H1 (cell line): ENCODE measurements at regions of chr15 and their contacts with region 1.

Region 1: GRCh38 chr15:45457641-45458433 is 64.7 kb downstream of the SLC30A4 start:
- DNase-seq: peak in 1 of 2 experiments; percentile 84
- H3K4me3 ChIP-seq: peak overlapping the region in 1 of 4 experiments; percentile 41; a peak in 3 of 8 replicates
- H3K27ac ChIP-seq: no peak overlapping the region
- H3K4me1 ChIP-seq: no peaks in the 10 kb centered on the region
- H3K27me3 ChIP-seq: peaks cover 7 to 15% (median 10%) of the 10 kb centered on the region in 4 experiments
- CTCF ChIP-seq: peak; percentile 21 to 91 (median 61)
- EP300 ChIP-seq: no peak
- POLR2A ChIP-seq: no peak
- RAD21 ChIP-seq: peak; percentile 93

Region 2: DNA sequence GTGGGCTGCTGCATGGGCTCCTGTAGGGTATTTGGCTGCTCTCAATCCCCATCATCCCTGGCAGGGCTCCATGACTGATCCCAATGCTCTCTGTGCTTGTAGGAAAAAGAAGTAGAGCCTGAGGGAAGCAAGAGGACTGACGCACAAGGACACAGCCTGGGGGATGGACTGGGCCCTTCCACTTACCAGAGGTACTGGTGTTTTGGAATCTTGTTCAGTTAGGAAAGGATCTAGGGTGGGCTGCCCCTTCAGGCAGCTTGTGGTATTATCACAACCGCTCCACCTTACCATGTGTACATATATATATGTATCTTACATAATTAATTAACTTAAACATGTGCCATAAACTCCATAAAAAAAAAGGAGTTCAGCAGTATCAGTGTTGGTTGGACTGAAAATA is 204.5 kb before region 1 on chr15:
- CTCF ChIA-PET with region 1: no interaction called
- POLR2A ChIA-PET with region 1: no interaction called
- DNase-seq: peak in 1 of 2 experiments; percentile 47
- H3K4me3 ChIP-seq: no peak overlapping the region
- H3K27ac ChIP-seq: no peak overlapping the region
- H3K4me1 ChIP-seq: no peaks in the 10 kb centered on the region; a peak in 1 of 7 replicates
- H3K27me3 ChIP-seq: no peaks in the 10 kb centered on the region
- CTCF ChIP-seq: peak in 2 of 3 experiments; percentile 38 to 46; a peak in 2 of 4 replicates
- EP300 ChIP-seq: no peak
- POLR2A ChIP-seq: no peak
- RAD21 ChIP-seq: peak; percentile 11 to 32; a peak in 3 of 4 replicates

Region 3: DNA sequence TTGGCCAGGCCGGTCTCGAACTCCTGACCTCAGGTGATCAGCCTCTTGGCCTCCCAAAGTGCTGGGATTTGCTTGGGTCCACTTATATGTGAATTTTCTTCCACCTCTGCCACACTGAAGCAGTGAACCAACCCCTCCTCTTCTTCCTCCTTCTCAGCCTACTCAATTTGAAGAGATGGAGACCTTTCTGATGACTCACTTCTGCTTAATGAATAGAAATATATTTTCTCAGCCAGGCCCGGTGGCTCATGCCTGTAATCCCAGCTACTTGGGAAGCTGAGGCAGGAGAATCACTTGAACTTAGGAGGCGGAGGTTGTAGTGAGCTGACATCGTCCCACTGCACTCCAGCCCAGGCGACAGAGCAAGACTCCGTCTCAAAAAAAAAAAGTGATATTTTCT is 32.7 kb before region 1 on chr15:
- CTCF ChIA-PET with region 1: interaction called, 76 read pairs
- POLR2A ChIA-PET with region 1: no interaction called
- DNase-seq: no peak
- H3K4me3 ChIP-seq: no peak overlapping the region
- H3K27ac ChIP-seq: no peak overlapping the region
- H3K4me1 ChIP-seq: no peaks in the 10 kb centered on the region
- H3K27me3 ChIP-seq: peaks cover 0 to 5% (median 2%) of the 10 kb centered on the region in 4 experiments; a peak in 4 of 7 replicates
- CTCF ChIP-seq: no peak
- EP300 ChIP-seq: no peak
- POLR2A ChIP-seq: no peak
- RAD21 ChIP-seq: no peak

Region 4: DNA sequence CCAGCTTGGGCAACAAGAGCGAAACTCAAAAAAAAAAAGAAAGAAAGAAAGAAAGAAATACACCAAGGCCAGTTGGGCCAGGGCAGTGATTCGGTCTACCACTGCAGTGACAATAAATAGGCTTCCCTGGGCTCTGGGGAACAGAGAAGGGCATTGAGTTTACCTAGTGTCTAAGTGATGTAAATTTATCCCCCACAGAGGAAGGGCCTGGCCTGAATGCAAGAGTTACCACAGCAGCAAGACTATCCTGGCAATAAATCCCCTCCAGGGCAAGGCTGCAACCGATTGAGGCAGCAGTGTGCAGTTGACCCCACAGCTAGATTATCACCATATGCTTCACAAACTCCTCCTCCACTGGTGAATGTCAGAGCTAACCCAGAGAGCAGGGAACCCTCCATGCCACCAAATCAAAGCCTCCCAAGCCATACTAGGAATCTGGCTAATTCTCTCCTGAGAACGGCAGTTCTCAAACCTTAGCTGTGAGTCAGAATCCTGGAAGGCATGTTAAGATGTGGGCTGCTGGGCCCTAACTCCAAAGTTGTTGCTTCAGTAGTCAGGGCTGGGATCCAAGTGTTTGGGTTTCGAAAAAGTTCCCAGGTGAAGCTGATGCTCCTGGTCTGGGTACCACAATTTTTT is 15.2 kb before region 1 on chr15:
- CTCF ChIA-PET with region 1: interaction called, 19 read pairs
- POLR2A ChIA-PET with region 1: no interaction called
- DNase-seq: no peak
- H3K4me3 ChIP-seq: no peak overlapping the region
- H3K27ac ChIP-seq: no peak overlapping the region
- H3K4me1 ChIP-seq: peaks cover 0 to 3% (median 3%) of the 10 kb centered on the region in 4 experiments; a peak in 3 of 7 replicates
- H3K27me3 ChIP-seq: peaks cover 0 to 5% (median 0%) of the 10 kb centered on the region in 4 experiments; a peak in 2 of 7 replicates
- CTCF ChIP-seq: no peak
- EP300 ChIP-seq: no peak
- POLR2A ChIP-seq: no peak
- RAD21 ChIP-seq: no peak

Region 5: GRCh38 chr15:45573961-45574629 is 116.3 kb after region 1 on chr15:
- CTCF ChIA-PET with region 1: interaction called, 11 read pairs
- POLR2A ChIA-PET with region 1: no interaction called
- DNase-seq: peak; percentile 63 to 94
- H3K4me3 ChIP-seq: peak overlapping the region in 2 of 4 experiments; percentile 14 to 35; a peak in 2 of 8 replicates
- H3K27ac ChIP-seq: no peak overlapping the region
- H3K4me1 ChIP-seq: peaks cover 0 to 2% (median 1%) of the 10 kb centered on the region in 4 experiments; a peak in 5 of 7 replicates
- H3K27me3 ChIP-seq: peaks cover 0 to 5% (median under 1%) of the 10 kb centered on the region in 4 experiments; a peak in 1 of 7 replicates
- CTCF ChIP-seq: peak; percentile 64 to 87 (median 81)
- EP300 ChIP-seq: no peak
- POLR2A ChIP-seq: no peak
- RAD21 ChIP-seq: peak; percentile 64 to 70